AG04450 (cell line): ENCODE measurements at regions of chr7 and their contacts with region 1.

Region 1: DNA sequence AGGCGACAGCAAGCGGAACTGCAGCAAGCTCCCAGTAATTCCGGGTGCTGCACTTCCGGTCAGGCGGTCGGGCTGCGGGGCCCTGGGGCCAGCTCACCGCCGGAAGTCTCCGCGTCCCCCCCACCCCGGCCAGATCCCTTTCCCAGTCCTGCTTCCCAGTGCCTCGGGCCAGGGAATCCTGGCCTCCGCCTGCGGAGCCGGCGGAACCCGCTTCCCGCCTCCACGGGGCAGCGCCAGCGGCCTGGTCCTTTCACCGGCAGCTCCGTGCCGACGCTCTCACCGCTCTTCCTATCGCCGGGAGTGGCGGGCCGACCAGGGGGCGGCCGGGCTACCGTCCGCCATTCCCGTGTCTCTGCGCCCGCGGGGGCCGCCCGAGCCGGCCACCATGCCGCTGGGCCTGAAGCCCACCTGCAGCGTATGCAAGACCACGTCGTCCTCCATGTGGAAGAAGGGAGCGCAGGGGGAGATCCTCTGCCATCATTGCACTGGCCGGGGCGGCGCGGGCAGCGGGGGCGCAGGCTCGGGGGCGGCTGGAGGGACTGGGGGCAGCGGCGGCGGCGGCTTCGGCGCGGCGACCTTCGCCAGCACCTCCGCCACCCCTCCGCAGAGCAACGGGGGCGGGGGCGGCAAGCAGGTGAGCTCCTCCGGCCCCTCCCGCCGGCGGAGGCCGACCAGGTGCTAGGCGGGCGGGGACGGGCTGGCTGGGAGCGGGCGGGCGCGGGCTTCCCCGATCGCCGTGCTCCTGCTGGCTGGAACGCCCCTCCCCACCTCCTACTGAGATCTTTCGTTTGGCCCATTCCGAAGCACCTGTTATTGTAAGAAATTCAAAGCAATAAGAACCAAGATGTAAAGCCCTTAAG is at the start of gene GATAD1:
- DNase-seq: peak; percentile 81
- H3K4me3 ChIP-seq: peak within 1 kb of the TSS; percentile 84
- H3K27ac ChIP-seq: peak within 1 kb of the TSS; percentile 69
- H3K27me3 ChIP-seq: no peaks in the 10 kb centered on the region
- CTCF ChIP-seq: peak; percentile 89
- polyA plus RNA-seq, gene GATAD1: 26.9 and 31.7 TPM in 2 replicates

Region 2: DNA sequence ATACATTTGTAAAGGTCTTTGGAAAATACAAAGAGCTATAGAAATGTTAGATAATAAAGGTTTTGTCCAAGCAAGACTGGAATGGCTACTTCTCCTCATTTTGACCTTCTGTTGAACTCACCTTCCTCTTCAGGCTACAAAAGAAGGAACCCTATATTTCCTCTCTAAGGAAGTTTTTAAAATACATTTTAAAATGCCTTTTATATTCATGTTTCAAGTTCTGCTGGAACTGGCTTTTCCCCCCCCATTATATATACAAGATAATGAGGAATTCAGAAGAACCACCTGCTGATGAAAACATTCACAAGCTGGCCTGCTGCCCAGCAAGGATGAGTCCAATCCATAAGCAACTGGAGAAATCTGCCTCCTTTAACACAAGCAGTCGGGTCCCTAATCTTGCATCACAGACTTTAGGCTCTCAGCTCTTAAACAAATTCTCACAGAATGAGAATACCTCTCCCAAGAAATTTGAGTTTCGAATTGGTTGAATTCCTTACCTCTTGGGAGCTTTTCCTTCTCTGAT is 611.7 kb before region 1 on chr7:
- CTCF ChIA-PET with region 1: interaction called, 29 read pairs
- POLR2A ChIA-PET with region 1: no interaction called
- DNase-seq: peak; percentile 23
- H3K4me3 ChIP-seq: no peak overlapping the region
- H3K27ac ChIP-seq: no peak overlapping the region
- H3K27me3 ChIP-seq: no peaks in the 10 kb centered on the region
- CTCF ChIP-seq: no peak

Region 3: GRCh38 chr7:91973639-91974038 is 473.9 kb before region 1 on chr7:
- CTCF ChIA-PET with region 1: no interaction called
- POLR2A ChIA-PET with region 1: no interaction called
- DNase-seq: no peak
- H3K4me3 ChIP-seq: no peak overlapping the region
- H3K27ac ChIP-seq: no peak overlapping the region
- H3K27me3 ChIP-seq: no peaks in the 10 kb centered on the region
- CTCF ChIP-seq: no peak

Region 4: GRCh38 chr7:92134271-92135051 is 313.1 kb before region 1 on chr7 and contains the start of gene CYP51A1:
- CTCF ChIA-PET with region 1: interaction called, 10 read pairs
- POLR2A ChIA-PET with region 1: interaction called, 4 read pairs
- DNase-seq: peak; percentile 72
- H3K4me3 ChIP-seq: peak within 1 kb of the TSS; percentile 89
- H3K27ac ChIP-seq: peak within 1 kb of the TSS; percentile 90
- H3K27me3 ChIP-seq: no peaks in the 10 kb centered on the region
- CTCF ChIP-seq: no peak
- polyA plus RNA-seq, gene CYP51A1: 9.1 and 12.3 TPM in 2 replicates

Region 5: GRCh38 chr7:92245487-92246362 is 201.8 kb before region 1 on chr7 and contains the starts of genes ANKIB1 and KRIT1:
- CTCF ChIA-PET with region 1: interaction called, 24 read pairs
- POLR2A ChIA-PET with region 1: interaction called, 7 read pairs
- DNase-seq: peak; percentile 21
- H3K4me3 ChIP-seq: peak within 1 kb of the TSS; percentile 92
- H3K27ac ChIP-seq: peak within 1 kb of the TSS; percentile 85
- H3K27me3 ChIP-seq: no peaks in the 10 kb centered on the region
- CTCF ChIP-seq: peak; percentile 16; the same call in 1 of the 2 replicates
- polyA plus RNA-seq, gene ANKIB1: 38.0 and 52.6 TPM in 2 replicates
- polyA plus RNA-seq, gene KRIT1: 34.2 and 45.1 TPM in 2 replicates

Region 6: DNA sequence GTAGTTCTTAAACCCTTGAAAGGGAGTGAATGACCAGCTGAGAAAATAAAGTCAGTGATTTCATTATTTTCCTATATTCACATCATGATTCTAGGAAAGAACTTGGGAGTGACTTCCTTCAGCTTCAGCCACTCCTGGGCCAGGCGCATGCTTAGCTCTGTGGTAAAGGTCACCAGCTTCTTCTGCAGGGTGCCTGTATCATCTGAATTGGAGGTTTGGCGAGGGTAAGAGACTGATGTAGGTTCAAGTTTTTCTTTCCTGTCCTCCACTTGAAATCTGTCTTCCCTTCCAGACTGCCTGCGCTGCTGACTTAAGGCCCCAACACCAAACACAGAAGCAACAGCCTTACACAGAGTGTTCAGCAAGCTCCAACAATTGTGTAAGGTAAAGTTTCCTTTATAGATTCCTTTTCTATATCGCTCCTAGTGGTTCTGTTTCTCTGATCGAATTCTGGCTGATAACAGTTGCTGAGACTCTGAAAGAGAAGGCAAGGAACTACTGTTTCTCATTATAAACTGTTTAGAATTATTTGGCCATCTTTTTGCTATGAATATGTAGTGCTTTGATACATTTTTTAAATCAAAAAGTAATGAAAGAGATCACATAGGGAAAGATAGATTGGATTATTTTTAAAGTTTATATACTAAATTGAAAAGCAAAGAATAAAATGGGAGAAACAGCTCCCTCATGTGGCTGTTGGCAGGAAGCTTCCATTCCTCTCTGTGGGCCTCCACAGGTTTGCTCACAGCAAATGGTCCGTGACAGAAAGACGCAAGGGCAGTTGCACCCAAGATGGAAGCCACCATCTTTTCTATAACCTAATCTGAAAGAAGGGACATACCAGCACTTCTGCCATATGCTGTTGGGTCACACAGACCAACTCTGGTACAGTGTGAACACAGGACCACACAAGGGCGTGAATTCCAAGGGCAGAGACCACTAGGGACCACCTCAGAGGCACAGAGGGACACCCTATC is 13.7 kb after region 1 on chr7:
- CTCF ChIA-PET with region 1: interaction called, 38 read pairs
- POLR2A ChIA-PET with region 1: interaction called, 5 read pairs
- DNase-seq: no peak
- H3K4me3 ChIP-seq: no peak overlapping the region
- H3K27ac ChIP-seq: no peak overlapping the region
- H3K27me3 ChIP-seq: no peaks in the 10 kb centered on the region
- CTCF ChIP-seq: peak; percentile 82